PC-9 (cell line): ENCODE measurements at regions of chr4 and their contacts with region 1.

Region 1: GRCh38 chr4:152763796-152764195 is 15.7 kb downstream of the TIGD4 start:
- DNase-seq: no peak
- H3K4me3 ChIP-seq: no peak overlapping the region
- H3K27ac ChIP-seq: no peak overlapping the region
- H3K4me1 ChIP-seq: no peaks in the 10 kb centered on the region
- H3K27me3 ChIP-seq: no peaks in the 10 kb centered on the region
- CTCF ChIP-seq: no peak

Region 2: DNA sequence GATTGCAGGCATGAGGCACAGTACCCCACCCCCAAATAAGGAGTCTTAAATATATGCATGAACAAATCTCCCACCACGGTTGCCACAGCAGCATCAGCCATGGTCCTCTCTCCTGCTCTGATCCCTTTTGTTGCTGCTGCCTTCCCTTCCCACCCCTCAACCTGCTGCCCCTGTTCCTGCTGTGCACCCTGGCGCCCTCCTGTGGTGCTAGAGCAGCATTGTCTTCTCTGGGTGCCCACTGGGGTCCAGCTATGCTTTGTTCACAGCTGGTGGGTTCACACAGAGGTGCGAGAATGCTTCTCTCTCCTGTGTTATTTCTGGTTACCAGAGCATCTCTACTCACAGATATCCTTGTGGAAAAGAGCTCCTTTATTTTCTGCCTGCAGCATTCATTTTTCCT is 1119.2 kb before region 1 on chr4:
- CTCF ChIA-PET with region 1: no interaction called
- POLR2A ChIA-PET with region 1: no interaction called
- intact Hi-C with region 1: no loop called
- DNase-seq: peak in 1 of 2 experiments; percentile 7
- H3K4me3 ChIP-seq: no peak overlapping the region
- H3K27ac ChIP-seq: no peak overlapping the region
- H3K4me1 ChIP-seq: peaks cover 12% of the 10 kb centered on the region
- H3K27me3 ChIP-seq: no peaks in the 10 kb centered on the region
- CTCF ChIP-seq: peak; percentile 55

Region 3: DNA sequence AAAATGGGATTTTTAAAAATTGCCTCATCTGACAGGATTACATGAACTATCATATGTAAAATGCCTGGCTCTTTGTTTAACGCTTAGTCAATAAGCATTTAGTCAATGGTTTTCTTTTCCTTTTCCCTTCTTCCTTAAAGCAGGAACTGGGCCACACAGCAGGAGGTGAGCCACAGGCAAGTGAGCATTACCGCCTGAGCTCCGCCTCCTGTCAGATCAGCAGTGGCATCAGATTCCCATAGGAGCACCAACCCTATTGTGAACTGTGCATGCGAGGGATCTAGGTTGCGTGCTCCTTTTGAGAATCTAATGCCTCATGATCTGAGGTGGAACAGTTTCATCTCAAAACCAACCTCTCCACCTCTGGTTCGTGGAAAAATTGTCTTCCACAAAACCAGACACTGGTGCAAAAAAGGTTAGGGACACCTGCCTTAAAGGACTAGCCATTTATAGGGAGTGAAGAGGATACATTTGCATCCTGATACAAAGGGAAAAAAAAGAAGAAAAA is 534.0 kb before region 1 on chr4:
- CTCF ChIA-PET with region 1: no interaction called
- POLR2A ChIA-PET with region 1: no interaction called
- intact Hi-C with region 1: no loop called
- DNase-seq: no peak
- H3K4me3 ChIP-seq: no peak overlapping the region
- H3K27ac ChIP-seq: no peak overlapping the region
- H3K4me1 ChIP-seq: no peaks in the 10 kb centered on the region
- H3K27me3 ChIP-seq: no peaks in the 10 kb centered on the region
- CTCF ChIP-seq: no peak

Region 4: DNA sequence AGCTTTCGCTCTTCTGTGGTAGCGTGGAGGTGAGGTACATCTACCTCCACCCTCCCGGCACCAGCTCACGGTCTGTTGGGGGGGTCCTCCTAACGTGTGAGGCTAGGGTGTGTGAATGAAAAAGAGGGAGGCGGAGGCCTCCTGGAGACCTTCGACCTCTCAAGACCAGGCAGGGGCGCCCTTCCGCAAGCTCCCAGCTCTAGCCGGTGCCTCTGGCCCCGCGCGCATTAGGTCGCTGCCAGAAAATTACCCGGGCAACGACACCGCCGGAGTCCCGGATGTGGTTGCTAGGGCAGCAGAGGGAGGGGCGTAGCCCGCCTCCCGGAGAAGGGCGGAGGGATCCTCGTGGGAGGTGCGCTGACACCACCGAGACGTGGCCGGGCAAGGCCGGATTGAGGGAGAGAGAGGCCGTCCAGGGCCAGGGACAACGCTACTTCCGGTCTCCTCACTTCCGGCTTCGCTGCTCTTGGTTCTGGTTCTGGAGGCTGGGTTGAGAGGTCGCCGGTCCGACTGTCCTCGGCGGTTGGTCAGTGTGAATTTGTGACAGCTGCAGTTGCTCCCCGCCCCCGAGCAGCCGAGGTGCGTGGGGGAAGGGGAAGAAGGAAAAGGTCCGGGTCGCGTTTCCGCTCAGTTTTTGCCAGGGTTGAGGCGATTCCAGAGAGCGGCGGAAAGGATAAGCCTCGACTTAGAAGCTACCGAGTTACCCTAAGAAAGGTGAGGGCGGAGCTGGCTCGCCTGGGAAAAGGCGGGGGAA is 15.9 kb after region 1 on chr4 and contains the starts of genes ARFIP1 and TIGD4:
- CTCF ChIA-PET with region 1: no interaction called
- POLR2A ChIA-PET with region 1: interaction called, 12 read pairs
- intact Hi-C with region 1: no loop called
- DNase-seq: peak; percentile 82 to 97
- H3K4me3 ChIP-seq: peak within 1 kb of the TSS; percentile 72
- H3K27ac ChIP-seq: peak within 1 kb of the TSS; percentile 71
- H3K4me1 ChIP-seq: peaks cover 24% of the 10 kb centered on the region; the same call in 1 of the 2 replicates
- H3K27me3 ChIP-seq: no peaks in the 10 kb centered on the region
- CTCF ChIP-seq: no peak
- total RNA-seq, gene ARFIP1: 37.4 and 38.4 TPM in 2 replicates
- total RNA-seq, gene TIGD4: 0.35 and 0.70 TPM in 2 replicates